ENCODE measurements at regions of chr22 and their contacts with region 1.

Region 1: GRCh38 chr22:46071451-46072109 is 78.7 kb upstream of the PPARA start:
- DNase-seq: peak; percentile 92
- H3K4me3 ChIP-seq: peak overlapping the region; percentile 64 to 88 (median 81)
- H3K27ac ChIP-seq: peak overlapping the region; percentile 68
- H3K4me1 ChIP-seq: peaks cover 53% of the 10 kb centered on the region
- H3K27me3 ChIP-seq: no peaks in the 10 kb centered on the region
- CTCF ChIP-seq: no peak
- POLR2A ChIP-seq: peak; percentile 91

Region 2: GRCh38 chr22:46013460-46014416 is 57.8 kb before region 1 on chr22:
- CTCF ChIA-PET with region 1: interaction called, 11 read pairs
- POLR2A ChIA-PET with region 1: interaction called, 3 read pairs
- dilution Hi-C with region 1: no loop called
- intact Hi-C with region 1: loop called (anchors 1 kb)
- DNase-seq: peak; percentile 88
- H3K4me3 ChIP-seq: peak overlapping the region; percentile 46 to 66 (median 50)
- H3K27ac ChIP-seq: peak overlapping the region; percentile 87
- H3K4me1 ChIP-seq: peaks cover 8% of the 10 kb centered on the region
- H3K27me3 ChIP-seq: no peaks in the 10 kb centered on the region
- CTCF ChIP-seq: peak; percentile 77 to 86
- POLR2A ChIP-seq: peak; percentile 78

Region 3: DNA sequence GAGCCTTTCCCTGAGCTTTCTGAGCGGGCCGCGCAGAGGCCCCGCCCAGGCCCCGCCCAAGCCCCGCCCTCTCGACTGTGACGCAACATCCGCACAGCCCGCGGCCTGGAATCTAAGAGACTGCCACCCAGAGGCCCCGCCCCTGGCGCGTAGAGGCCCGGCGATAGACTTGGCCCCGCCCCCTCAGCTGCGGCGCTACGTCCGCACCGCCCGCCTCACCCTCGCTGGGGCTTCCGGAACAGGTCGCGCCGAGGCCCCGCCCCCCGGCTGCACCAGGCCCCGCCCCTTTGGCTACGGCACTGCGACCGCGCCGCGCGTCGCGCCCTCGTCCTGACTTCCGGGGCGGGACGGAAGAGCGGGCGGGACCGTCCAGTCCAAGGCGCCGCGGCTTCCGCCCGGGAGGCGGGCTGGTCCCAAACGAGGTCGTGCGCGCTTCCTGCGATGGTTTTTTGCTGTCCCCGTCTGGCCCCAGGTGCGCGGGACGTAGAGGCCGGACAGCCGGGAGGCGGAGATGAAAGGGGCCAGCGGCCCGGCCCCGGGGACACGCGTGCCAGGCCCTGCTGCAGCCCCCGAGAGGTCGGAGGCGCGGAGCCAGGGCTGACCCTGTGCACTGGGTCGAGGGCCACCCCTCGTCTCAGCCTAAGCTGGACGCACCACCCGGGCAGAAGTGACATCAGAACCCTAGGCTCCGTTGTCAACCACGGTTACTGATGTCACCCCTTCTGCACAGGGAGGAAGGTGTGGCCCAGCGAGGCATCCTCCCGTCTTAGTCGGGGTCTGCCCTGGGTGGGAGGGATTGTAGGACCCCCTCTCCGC is 35.6 kb before region 1 on chr22:
- CTCF ChIA-PET with region 1: interaction called, 4 read pairs
- POLR2A ChIA-PET with region 1: interaction called, 3 read pairs
- dilution Hi-C with region 1: no loop called
- intact Hi-C with region 1: loop called (anchors 1 kb)
- DNase-seq: peak; percentile 100
- H3K4me3 ChIP-seq: peak overlapping the region; percentile 18 to 68 (median 26)
- H3K27ac ChIP-seq: peak overlapping the region; percentile 89
- H3K4me1 ChIP-seq: peaks cover 17% of the 10 kb centered on the region
- H3K27me3 ChIP-seq: no peaks in the 10 kb centered on the region
- CTCF ChIP-seq: no peak
- POLR2A ChIP-seq: peak; percentile 57

Region 4: DNA sequence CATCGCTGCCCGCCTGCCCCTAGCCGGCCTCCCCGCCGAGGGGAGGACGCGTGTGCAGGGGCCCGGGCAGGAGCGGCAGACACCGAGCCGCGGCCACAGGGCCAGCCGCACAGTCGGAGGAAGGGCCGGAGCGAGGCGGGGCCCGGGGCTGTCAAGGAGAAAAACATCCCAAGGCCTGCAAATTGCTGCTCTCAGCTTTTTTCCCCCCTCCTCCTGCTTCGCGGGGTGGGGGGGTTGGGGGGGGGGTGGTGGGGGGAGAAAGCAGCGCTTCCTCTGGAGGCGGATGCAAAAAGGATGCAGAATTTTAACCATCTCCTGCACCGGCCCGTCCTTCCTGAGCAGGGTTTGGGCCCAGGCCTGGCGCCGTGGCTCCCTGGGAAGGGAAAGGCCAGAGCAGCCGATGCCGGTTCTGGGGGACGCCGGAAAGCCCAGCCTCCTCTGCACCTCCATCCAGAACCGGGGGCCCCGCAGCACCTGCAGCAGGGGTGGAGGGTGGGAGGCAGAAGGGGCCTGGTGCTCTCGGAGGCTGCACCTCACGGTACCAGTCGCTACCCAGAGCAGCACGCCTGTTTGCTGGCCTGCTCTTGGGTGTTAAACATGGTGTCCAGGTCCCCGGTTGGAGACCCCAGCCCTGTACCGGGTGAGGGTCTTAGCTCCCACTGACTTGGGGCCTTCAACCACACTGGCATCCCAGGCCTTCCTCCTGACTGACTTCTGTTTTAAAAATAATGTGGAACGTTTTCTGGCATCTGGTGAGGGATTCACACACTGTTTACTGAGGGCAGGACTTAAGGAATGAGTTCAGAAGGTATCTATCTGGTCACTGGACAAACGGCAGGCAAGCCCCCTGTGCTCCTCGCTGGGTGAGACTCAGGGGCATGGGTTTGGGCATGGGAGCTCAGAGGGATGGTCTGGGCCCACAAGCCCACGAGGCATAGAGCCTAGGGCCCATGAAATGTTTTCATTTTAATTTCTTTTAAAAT is 17.2 kb before region 1 on chr22:
- CTCF ChIA-PET with region 1: interaction called, 6 read pairs
- POLR2A ChIA-PET with region 1: interaction called, 4 read pairs
- dilution Hi-C with region 1: no loop called
- intact Hi-C with region 1: loop called (anchors 1 kb)
- DNase-seq: peak; percentile 55
- H3K4me3 ChIP-seq: peak overlapping the region; percentile 29 to 49 (median 49)
- H3K27ac ChIP-seq: peak overlapping the region; percentile 56
- H3K4me1 ChIP-seq: peaks cover 52% of the 10 kb centered on the region
- H3K27me3 ChIP-seq: no peaks in the 10 kb centered on the region
- CTCF ChIP-seq: no peak
- POLR2A ChIP-seq: peak; percentile 13

Region 5: GRCh38 chr22:46087336-46088277 is 16.0 kb after region 1 on chr22:
- CTCF ChIA-PET with region 1: interaction called, 11 read pairs
- POLR2A ChIA-PET with region 1: interaction called, 7 read pairs
- dilution Hi-C with region 1: no loop called
- intact Hi-C with region 1: loop called (anchors 1 kb)
- DNase-seq: peak; percentile 85
- H3K4me3 ChIP-seq: no peak overlapping the region
- H3K27ac ChIP-seq: peak overlapping the region; percentile 85
- H3K4me1 ChIP-seq: peaks cover 69% of the 10 kb centered on the region
- H3K27me3 ChIP-seq: no peaks in the 10 kb centered on the region
- CTCF ChIP-seq: no peak
- POLR2A ChIP-seq: no peak

Region 6: DNA sequence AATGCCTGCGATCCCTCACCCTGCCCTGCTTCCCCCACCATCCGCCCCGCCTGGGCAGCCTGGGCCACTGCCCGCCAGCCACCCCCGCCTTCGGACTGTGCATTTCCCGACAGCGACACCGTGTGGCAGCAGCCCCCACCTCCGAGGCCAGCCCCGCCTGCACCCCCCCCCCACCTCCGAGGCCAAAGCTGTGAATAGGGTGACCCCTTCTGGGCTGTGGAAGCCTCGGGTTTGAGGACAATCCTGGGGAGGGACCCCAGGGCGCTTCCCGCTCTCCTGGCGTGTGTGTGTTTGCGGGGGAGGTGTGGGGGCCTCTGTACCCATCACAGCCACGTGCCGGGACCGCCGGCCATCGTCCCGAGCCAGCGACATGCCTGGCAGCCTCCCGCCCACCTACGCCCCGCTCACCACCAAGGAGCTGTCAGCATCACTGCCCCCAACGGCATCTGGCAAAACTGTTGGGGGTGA is 44.9 kb after region 1 on chr22:
- CTCF ChIA-PET with region 1: interaction called, 17 read pairs
- POLR2A ChIA-PET with region 1: no interaction called
- dilution Hi-C with region 1: no loop called
- intact Hi-C with region 1: no loop called
- DNase-seq: peak; percentile 85
- H3K4me3 ChIP-seq: no peak overlapping the region
- H3K27ac ChIP-seq: no peak overlapping the region
- H3K4me1 ChIP-seq: no peaks in the 10 kb centered on the region
- H3K27me3 ChIP-seq: no peaks in the 10 kb centered on the region
- CTCF ChIP-seq: peak; percentile 81 to 95
- POLR2A ChIP-seq: no peak

Region 7: GRCh38 chr22:46219636-46220035 is 148.1 kb after region 1 on chr22:
- CTCF ChIA-PET with region 1: no interaction called
- POLR2A ChIA-PET with region 1: no interaction called
- dilution Hi-C with region 1: no loop called
- intact Hi-C with region 1: no loop called
- DNase-seq: no peak
- H3K4me3 ChIP-seq: no peak overlapping the region
- H3K27ac ChIP-seq: no peak overlapping the region
- H3K4me1 ChIP-seq: no peaks in the 10 kb centered on the region
- H3K27me3 ChIP-seq: no peaks in the 10 kb centered on the region
- CTCF ChIP-seq: no peak
- POLR2A ChIP-seq: no peak